ENCODE measurements at regions of chr1 and their contacts with region 1.

Region 1: DNA sequence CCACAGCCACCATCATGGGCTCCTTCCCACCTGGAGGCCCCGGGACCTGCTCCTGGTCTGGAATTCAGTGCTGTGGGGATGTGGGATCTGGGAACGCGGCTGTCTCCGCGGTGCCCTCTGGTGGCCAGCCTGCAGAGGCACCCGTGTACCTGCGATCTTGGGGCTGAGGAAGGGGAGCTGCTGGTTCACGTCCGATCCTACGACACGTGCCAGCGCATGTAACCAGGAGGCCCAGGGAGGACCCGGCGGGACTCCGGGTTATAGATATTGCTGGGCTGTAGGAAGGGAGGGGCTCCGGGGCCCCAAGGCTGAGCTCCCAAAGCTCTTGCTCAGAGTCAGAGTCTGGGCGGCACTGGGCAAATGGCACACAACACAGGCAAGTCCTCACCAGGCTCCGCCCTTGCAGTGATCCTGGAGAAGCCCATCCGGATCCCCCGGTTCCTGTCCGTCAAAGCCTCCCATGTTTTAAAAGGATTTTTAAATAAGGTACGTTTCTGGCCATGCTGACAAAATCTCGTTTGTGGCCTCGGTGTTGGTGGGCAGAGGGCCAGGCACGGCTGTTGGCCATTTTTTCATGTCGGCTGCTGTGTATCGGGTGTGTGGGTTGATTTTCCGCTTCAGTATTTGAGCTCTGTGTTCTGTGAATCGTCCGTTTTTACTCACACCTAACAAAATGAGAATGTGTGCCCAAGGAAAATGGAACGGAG is 20.1 kb downstream of the FAAP20 start:
- DNase-seq: peak; percentile 84
- ATAC-seq: peak; percentile 88
- H3K4me3 Mint-ChIP-seq: no peak overlapping the region
- H3K27ac Mint-ChIP-seq: peak overlapping the region; percentile 88
- H3K4me1 Mint-ChIP-seq: 0 out of 2 replicates have a peak, but pooled peaks cover 3% of the 10 kb centered on the region
- H3K27me3 Mint-ChIP-seq: no peaks in the 10 kb centered on the region
- CTCF ChIP-seq: peak; percentile 85

Region 2: GRCh38 chr1:1943834-1944570 is 230.5 kb before region 1 on chr1:
- CTCF ChIA-PET with region 1: interaction called, 12 read pairs
- POLR2A ChIA-PET with region 1: no interaction called
- DNase-seq: peak; percentile 85
- ATAC-seq: peak; percentile 94
- H3K4me3 Mint-ChIP-seq: peak overlapping the region; percentile 43
- H3K27ac Mint-ChIP-seq: no peak overlapping the region; the same call in 1 of the 2 replicates
- H3K4me1 Mint-ChIP-seq: peaks cover 4% of the 10 kb centered on the region; the same call in 1 of the 2 replicates
- H3K27me3 Mint-ChIP-seq: no peaks in the 10 kb centered on the region
- CTCF ChIP-seq: peak; percentile 91

Region 3: DNA sequence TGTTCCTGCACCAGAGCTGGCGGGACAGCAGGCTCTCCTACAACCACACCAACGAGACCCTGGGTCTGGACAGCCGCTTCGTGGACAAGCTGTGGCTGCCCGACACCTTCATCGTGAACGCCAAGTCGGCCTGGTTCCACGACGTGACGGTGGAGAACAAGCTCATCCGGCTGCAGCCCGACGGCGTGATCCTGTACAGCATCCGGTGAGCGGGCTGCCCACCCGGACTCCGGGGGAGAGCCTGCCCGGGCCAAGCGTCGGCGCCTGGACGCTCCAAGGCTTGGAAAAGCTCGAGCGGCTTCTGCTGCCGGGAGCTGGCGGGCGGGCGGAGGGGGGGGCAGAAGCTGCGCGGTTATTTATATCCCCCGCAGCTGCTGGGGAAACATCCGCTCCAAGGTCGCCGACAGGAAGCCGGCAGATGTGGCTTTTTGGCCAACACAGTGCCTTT is 148.9 kb before region 1 on chr1:
- CTCF ChIA-PET with region 1: no interaction called
- POLR2A ChIA-PET with region 1: no interaction called
- DNase-seq: no peak
- ATAC-seq: no peak
- H3K4me3 Mint-ChIP-seq: no peak overlapping the region
- H3K27ac Mint-ChIP-seq: no peak overlapping the region
- H3K4me1 Mint-ChIP-seq: no peaks in the 10 kb centered on the region
- H3K27me3 Mint-ChIP-seq: peaks cover 9% of the 10 kb centered on the region
- CTCF ChIP-seq: no peak

Region 4: DNA sequence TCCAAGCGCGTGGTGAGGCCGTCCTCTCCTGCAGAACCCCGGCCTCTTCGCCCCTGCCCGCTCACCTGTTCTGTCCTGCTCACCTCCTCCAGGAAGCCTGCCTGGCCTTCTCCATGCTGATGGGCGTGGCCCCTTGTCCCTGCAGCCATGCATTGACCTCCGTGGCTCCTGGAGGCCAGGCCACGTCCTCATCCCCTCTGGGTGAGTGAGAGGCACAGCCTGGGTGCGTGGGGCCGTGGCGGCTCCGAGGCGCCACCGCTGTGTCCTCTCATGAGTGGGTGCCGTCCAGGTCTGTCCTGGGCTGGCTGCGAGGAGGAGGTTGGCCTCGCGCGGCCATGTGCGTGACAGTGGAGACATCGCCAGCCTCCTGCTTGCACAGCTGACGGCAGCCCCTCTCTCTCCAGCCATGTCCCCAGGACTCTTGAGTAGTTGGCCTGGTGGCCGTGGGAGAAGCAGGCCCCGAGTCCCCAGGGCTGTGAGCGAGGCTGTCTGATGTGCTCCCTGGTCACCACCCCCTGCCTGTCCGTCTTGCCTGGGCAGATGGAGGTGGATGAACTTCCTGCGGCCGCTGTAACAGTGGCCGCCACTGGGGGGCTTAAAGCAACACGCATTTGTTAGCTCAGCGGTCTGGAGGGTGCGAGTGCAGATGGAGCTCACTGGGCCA is 66.2 kb before region 1 on chr1:
- CTCF ChIA-PET with region 1: interaction called, 27 read pairs
- POLR2A ChIA-PET with region 1: no interaction called
- DNase-seq: peak; percentile 81
- ATAC-seq: peak; percentile 83
- H3K4me3 Mint-ChIP-seq: no peak overlapping the region
- H3K27ac Mint-ChIP-seq: no peak overlapping the region
- H3K4me1 Mint-ChIP-seq: peaks cover 7% of the 10 kb centered on the region
- H3K27me3 Mint-ChIP-seq: no peaks in the 10 kb centered on the region
- CTCF ChIP-seq: peak; percentile 37; the same call in 1 of the 2 replicates

Region 5: DNA sequence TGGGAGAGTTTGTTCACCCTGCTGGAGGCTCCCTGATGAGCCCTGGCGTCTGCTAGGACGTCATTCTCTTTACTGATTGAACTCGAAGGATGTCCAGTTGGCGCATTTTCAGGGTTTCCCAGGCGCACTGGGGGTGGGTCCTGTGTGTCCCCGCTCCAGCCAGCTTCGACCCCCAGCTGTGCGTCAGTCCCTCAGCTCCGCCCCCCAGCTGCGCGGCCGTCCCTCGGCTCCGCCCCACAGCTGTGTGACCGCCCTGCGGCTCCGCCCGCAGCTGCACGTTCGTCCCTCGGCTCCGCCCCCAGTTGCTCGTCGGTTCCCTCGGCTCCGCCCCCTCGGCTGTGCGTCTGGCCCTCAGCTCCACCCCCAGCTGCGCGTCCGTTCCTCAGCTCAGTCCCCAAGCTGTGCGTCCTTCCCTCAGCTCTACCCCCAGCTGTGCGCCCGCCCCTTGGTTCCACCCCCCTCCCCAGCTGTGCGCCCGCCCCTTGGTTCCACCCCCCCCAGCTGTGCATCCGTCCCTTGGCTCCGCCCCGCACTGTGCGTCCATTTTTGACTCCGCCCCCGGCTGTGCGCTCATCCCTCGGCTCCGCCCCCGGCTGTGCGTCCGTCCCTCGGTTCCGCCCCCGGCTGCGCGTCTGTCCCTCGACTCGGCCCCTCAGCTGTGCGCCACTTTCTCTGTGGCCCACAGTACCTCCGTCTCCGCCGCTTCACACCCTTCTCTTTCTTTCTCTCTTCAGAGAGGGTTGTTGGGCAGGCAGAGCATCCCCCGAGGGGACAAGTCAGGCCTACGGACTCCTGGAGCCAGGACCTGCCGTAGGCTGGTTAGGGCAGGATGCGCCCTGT is 41.2 kb before region 1 on chr1:
- CTCF ChIA-PET with region 1: interaction called, 31 read pairs
- POLR2A ChIA-PET with region 1: no interaction called
- DNase-seq: peak; percentile 99
- ATAC-seq: peak; percentile 91
- H3K4me3 Mint-ChIP-seq: peak overlapping the region; percentile 58
- H3K27ac Mint-ChIP-seq: peak overlapping the region; percentile 97
- H3K4me1 Mint-ChIP-seq: peaks cover 20% of the 10 kb centered on the region
- H3K27me3 Mint-ChIP-seq: no peaks in the 10 kb centered on the region; the same call in 1 of the 2 replicates
- CTCF ChIP-seq: no peak

Region 6: DNA sequence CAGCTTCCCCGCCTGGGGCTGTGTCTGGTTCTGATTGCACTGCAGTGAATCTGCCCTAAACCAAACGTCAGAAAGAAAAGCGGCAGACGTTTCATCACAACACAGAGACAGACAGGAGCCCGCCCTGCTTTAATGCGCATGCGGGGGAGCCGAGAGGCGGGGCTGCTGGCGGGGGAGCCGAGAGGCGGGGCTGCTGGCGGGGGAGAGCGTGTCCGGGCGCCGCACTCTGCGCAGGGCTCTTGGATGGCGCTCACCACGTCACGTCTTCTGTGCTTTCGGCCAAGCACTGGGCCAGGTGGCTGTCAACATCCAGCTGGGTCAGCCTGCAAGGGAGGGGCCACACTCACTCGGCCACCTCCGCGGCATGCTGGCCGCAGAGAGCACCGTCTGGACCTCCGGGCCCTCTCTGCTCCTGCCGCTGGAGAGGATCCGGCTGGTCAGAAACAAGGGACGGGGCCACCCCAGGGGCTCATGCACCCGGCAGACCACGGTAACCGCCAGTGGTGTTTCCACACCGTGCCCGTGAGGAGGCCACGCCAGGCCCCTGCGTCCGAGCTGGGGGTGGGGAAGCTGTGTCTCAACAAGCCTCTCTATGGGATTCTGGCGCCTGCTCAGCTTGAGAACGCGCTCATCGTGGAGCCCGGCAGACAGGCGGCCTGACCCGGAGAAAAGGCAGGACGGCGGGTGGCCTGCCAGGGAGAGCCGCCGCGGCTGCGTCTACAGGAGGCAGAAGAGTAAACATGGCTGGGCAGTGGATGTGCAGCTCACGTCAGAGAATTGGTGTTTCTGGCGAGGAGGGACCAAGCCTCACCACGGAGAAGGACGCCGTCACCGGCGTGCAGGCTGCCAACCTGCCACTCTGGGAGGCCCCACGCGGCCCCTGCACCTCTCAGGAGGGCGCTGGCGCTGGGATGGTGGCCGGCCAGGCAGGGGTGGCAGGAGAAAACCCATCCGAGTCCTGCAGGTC is 15.2 kb after region 1 on chr1:
- CTCF ChIA-PET with region 1: interaction called, 27 read pairs
- POLR2A ChIA-PET with region 1: interaction called, 3 read pairs
- DNase-seq: peak; percentile 90
- ATAC-seq: peak; percentile 82
- H3K4me3 Mint-ChIP-seq: peak overlapping the region; percentile 54
- H3K27ac Mint-ChIP-seq: peak overlapping the region; percentile 93
- H3K4me1 Mint-ChIP-seq: peaks cover 11% of the 10 kb centered on the region
- H3K27me3 Mint-ChIP-seq: no peaks in the 10 kb centered on the region
- CTCF ChIP-seq: no peak

Region 7: GRCh38 chr1:2539312-2539907 is 364.9 kb after region 1 on chr1:
- CTCF ChIA-PET with region 1: no interaction called
- POLR2A ChIA-PET with region 1: no interaction called
- DNase-seq: peak; percentile 83
- ATAC-seq: peak; percentile 79
- H3K4me3 Mint-ChIP-seq: no peak overlapping the region
- H3K27ac Mint-ChIP-seq: no peak overlapping the region
- H3K4me1 Mint-ChIP-seq: peaks cover 9% of the 10 kb centered on the region
- H3K27me3 Mint-ChIP-seq: peaks cover 44% of the 10 kb centered on the region
- CTCF ChIP-seq: peak; percentile 57

Measured in WTC11 (cell line).